A549 (cell line): ENCODE measurements at regions of chr20 and their contacts with region 1.

Region 1: DNA sequence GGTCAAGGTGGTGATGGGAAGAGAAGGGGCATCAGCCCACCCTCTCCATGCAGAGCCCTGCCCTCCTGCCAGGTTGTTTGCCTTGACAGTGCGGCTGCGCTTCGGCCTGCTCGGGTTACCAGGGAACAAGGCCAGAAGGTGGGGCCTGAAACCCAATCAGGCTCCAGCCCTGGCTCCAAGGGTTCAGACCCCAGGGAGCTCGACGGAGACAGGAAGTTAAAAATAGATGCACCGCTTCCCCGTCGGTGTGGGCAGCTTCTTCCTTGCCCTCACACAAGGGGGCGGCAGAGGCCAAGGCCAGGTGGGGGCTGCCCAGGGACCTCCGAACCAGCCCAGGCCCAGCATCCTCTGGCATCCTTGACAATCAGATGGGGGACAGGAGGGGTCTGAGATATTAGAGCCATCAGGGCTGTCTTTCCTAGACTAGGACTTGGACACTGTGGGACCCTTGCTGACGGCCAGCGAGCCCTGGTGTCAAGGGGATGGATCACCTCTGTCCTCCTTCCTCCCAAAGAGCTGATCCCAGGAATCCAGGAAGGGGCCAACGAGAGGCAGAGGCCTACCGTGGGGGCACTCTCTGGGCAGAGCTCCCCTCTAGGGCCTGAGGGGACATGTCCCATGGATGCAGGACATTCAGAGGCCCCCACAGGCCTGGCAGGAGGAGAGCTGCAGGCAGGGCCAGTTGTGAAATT is 65.2 kb downstream of the RIPOR3 start:
- DNase-seq: peak; percentile 67 to 73
- ATAC-seq: peak; percentile 75 to 89
- H3K4me3 ChIP-seq: no peak overlapping the region
- H3K27ac ChIP-seq: peak overlapping the region; percentile 70 to 79
- H3K4me1 ChIP-seq: peaks cover 30% of the 10 kb centered on the region
- CTCF ChIP-seq: peak; percentile 81
- EP300 ChIP-seq: no peak
- POLR2A ChIP-seq: no peak
- RAD21 ChIP-seq: peak; percentile 95 to 97

Region 2: GRCh38 chr20:50438986-50439407 is 187.1 kb before region 1 on chr20:
- CTCF ChIA-PET with region 1: no interaction called
- POLR2A ChIA-PET with region 1: no interaction called
- DNase-seq: peak; percentile 78 to 87
- ATAC-seq: peak; percentile 63 to 67
- H3K4me3 ChIP-seq: no peak overlapping the region
- H3K27ac ChIP-seq: peak overlapping the region; percentile 90 to 94
- H3K4me1 ChIP-seq: peaks cover 83% of the 10 kb centered on the region
- CTCF ChIP-seq: no peak
- EP300 ChIP-seq: peak in 1 of 2 experiments; percentile 47; a peak in 1 of 5 replicates
- POLR2A ChIP-seq: no peak
- RAD21 ChIP-seq: 0 out of 5 replicates have a peak, but pooled peaks of 1 of the 2 experiments have one; percentile 3

Region 3: DNA sequence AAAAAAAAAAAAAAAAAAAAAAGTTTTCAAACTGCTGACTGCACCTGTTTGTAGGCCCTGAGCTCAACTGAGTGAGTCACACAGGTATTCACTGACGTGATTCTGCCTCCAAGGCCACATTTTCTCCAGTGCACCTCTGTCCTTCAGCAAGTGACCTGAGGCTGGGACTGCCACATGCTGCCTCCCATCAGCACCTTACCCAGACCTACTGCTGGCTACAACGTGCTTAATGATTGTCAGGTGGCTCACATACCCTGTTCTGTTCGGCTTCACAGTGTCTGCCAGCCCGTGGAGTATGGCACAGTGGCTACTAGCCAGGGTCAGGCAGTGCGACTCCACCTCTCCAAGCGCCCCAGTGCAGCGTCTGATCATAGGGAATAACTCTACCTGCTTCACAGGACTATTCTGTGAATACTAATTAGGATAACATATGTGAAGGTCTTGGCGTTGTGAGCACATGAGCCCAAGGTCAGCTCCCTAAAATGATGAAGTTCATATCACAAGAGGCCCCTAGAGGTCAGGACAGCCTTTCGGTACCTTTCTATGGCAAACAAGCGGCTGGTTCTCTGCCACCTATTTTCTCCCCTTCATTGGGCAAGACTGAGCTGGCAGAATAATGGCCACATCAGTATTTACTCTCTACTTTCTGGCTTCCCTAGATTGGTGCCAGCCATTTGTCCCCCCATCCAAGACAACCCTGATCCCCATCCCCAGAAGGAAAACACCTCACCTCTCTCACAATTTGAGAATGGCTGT is 37.1 kb after region 1 on chr20:
- CTCF ChIA-PET with region 1: interaction called, 25 read pairs
- POLR2A ChIA-PET with region 1: no interaction called
- DNase-seq: peak in 1 of 2 experiments; percentile 79
- ATAC-seq: peak; percentile 81 to 86
- H3K4me3 ChIP-seq: no peak overlapping the region
- H3K27ac ChIP-seq: peak overlapping the region; percentile 56 to 72; a peak in 5 of 6 replicates
- H3K4me1 ChIP-seq: peaks cover 42% of the 10 kb centered on the region
- CTCF ChIP-seq: peak; percentile 65
- EP300 ChIP-seq: no peak
- POLR2A ChIP-seq: no peak
- RAD21 ChIP-seq: peak; percentile 82 to 86

Region 4: DNA sequence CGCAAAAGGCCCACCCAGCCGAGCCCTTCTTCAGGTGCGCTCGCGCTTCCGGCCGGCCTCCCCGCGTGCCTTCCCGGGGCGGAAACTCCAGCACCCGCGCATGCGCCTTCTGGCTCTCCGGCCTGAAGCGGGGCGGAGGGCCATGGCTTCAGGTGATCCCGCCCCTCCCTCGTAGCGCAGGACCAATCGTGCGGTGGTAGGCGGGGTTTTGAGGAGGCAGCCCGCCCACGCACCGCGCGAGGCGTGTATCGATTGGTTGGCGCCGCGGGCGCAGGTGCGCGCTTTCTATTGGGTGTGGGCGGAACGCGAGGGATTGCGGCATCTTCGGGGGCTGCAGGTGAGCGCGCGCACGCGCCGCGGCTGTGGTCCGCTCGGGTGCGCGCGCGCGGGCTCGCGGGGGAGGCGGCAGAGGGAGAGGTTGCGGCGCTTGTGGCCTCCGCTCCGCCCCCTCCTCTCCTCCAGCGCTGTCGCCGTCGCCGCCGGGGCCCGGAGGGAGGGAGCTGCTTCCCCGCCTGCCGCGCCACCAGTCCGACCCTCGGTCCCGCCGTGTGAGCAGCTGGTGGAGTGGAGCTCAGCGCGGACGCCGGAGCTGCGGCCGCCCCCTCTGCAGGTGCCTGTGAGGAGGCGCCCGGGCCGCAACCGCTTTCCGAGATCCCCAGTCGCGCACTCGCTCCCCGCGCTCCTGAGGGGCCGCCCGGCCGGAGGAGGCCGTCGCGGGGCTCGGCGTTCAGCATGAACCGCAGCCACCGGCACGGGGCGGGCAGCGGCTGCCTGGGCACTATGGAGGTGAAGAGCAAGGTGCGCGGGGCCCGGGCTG is 105.1 kb after region 1 on chr20 and contains the start of gene PARD6B:
- CTCF ChIA-PET with region 1: interaction called, 24 read pairs
- POLR2A ChIA-PET with region 1: no interaction called
- DNase-seq: peak; percentile 96 to 100
- ATAC-seq: peak; percentile 76 to 86
- H3K4me3 ChIP-seq: peak within 1 kb of the TSS; percentile 90
- H3K27ac ChIP-seq: peak within 1 kb of the TSS; percentile 96
- H3K4me1 ChIP-seq: peaks cover 68% of the 10 kb centered on the region
- CTCF ChIP-seq: no peak
- EP300 ChIP-seq: no peak
- POLR2A ChIP-seq: peak; percentile 74
- RAD21 ChIP-seq: 0 out of 5 replicates have a peak, but pooled peaks of 1 of the 2 experiments have one; percentile 11
- polyA plus RNA-seq, gene PARD6B: 6.2 and 6.4 TPM in 2 replicates

Region 5: GRCh38 chr20:50744143-50744792 is 118.1 kb after region 1 on chr20:
- CTCF ChIA-PET with region 1: interaction called, 130 read pairs
- POLR2A ChIA-PET with region 1: interaction called, 4 read pairs
- DNase-seq: peak; percentile 84 to 92
- ATAC-seq: peak; percentile 86 to 97
- H3K4me3 ChIP-seq: peak overlapping the region; percentile 23; the same call in 2 of the 3 replicates
- H3K27ac ChIP-seq: peak overlapping the region; percentile 86 to 94
- H3K4me1 ChIP-seq: peaks cover 90% of the 10 kb centered on the region
- CTCF ChIP-seq: peak; percentile 57
- EP300 ChIP-seq: peak in 1 of 2 experiments; percentile 24; a peak in 1 of 5 replicates
- POLR2A ChIP-seq: no peak
- RAD21 ChIP-seq: peak; percentile 81 to 84

Region 6: DNA sequence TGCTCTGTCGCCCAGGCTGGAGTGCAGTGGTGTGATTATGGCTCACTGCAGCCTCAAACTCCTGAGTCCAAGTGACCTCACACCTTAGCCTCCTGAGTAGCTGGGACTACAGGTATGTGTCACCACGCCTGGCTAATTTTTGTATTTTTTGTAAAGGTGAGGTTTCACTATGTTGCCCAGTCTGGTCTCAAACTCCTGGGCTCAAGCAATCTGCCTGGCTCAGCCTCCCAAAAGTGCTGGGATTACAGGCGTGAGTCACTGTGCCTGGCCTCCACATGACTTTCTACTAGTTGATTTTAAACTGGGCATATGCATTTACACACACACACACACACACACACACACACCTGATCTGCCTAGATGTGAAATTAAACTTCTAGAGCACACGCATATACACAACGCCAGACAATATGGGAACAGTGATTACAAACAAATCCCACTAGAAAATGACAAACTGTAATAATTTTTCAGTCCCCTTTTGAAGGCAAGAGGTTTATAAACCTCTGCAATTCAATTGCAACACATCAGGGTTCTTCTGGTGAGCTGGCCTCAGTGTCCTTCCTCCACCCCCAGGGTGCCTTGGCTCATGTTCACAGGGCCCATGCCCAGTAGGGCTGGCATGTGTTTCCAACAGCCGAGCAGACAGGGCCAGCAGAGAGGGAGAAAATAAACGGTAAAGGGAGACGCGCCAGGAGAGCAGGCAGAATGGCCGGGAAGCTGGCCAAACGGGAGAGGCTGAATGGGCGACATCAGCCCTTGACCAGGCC is 136.5 kb after region 1 on chr20:
- CTCF ChIA-PET with region 1: interaction called, 10 read pairs
- POLR2A ChIA-PET with region 1: no interaction called
- DNase-seq: peak; percentile 51 to 91
- ATAC-seq: peak; percentile 61 to 72
- H3K4me3 ChIP-seq: 0 out of 3 replicates have a peak overlapping the region, but pooled peaks have one; percentile 4
- H3K27ac ChIP-seq: peak overlapping the region; percentile 96 to 98
- H3K4me1 ChIP-seq: peaks cover 66% of the 10 kb centered on the region
- CTCF ChIP-seq: no peak
- EP300 ChIP-seq: peak; percentile 40 to 85; a peak in 3 of 5 replicates
- POLR2A ChIP-seq: no peak
- RAD21 ChIP-seq: 0 out of 5 replicates have a peak, but pooled peaks have one; percentile 5 to 22